ENCODE measurements at regions of chr4 and their contacts with region 1.

Region 1: DNA sequence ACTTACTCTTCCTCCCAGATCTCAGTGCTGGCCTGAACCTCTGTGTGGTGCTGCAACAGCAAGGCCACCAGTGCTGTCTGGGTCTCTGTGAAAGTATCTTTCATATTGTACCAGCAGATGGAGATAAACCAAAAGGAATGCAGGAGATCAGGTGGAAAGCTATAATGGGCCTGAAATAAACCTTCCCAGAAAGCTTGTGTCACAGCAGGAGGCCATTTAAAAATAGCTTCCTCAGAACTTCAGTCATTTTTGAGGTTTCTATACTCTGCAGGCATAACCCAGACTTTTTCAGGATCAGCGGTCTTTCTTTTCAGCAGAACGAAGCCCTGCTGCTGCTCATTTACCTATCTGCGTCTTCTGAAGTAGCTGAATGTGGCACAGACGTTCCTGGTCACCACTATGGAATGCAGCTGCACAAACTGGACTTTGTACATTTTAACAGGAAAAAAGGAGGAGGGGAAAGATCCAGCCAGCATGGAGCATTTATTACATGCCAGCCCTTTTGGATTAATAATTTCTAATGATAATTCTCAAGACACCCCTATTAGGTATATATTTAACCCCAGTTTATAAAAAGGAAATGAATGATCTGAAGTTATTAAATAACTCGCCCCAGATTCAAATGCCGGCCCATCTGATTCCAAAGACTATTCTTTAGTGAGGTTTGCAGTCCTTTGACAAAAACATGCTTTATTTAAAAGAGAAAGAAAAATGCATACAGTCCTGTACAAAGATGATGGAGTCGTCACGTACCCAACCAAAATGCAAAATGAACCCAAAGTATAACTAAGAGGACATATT is 119.7 kb downstream of the NFKB1 start:
- DNase-seq: peak; percentile 51
- H3K4me3 ChIP-seq: no peak overlapping the region
- H3K27ac ChIP-seq: no peak overlapping the region
- H3K4me1 ChIP-seq: no peaks in the 10 kb centered on the region
- H3K27me3 ChIP-seq: no peaks in the 10 kb centered on the region
- CTCF ChIP-seq: peak; percentile 43 to 66 (median 46)
- POLR2A ChIP-seq: no peak

Region 2: DNA sequence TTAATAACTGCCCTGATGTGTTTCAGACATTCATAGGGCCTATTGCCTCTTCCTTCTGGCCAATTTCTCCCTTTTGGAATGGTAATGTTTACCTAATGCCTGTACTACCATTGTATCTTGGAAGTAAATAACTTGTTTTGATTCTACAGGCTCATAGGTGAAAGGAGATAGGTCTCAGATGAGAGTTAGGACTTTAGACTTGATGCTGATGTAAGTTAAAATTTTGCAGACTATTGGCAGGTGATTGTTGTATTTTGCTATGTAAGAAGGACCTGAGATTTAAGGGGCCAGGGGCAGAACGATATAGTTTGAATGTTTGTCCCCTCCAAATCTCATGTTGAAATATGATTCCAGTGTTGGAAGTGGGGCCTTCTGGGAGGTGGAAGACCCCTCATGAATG is 491.1 kb before region 1 on chr4:
- intact Hi-C with region 1: no loop called
- DNase-seq: no peak
- H3K4me3 ChIP-seq: no peak overlapping the region
- H3K27ac ChIP-seq: no peak overlapping the region
- H3K4me1 ChIP-seq: no peaks in the 10 kb centered on the region
- H3K27me3 ChIP-seq: no peaks in the 10 kb centered on the region
- CTCF ChIP-seq: no peak
- POLR2A ChIP-seq: no peak

Region 3: GRCh38 chr4:102449751-102450352 is 171.0 kb before region 1 on chr4:
- intact Hi-C with region 1: loop called (anchors 10 kb)
- DNase-seq: peak; percentile 48
- H3K4me3 ChIP-seq: no peak overlapping the region
- H3K27ac ChIP-seq: no peak overlapping the region
- H3K4me1 ChIP-seq: no peaks in the 10 kb centered on the region
- H3K27me3 ChIP-seq: no peaks in the 10 kb centered on the region
- CTCF ChIP-seq: peak in 2 of 3 experiments; percentile 37 to 38
- POLR2A ChIP-seq: no peak

Region 4: DNA sequence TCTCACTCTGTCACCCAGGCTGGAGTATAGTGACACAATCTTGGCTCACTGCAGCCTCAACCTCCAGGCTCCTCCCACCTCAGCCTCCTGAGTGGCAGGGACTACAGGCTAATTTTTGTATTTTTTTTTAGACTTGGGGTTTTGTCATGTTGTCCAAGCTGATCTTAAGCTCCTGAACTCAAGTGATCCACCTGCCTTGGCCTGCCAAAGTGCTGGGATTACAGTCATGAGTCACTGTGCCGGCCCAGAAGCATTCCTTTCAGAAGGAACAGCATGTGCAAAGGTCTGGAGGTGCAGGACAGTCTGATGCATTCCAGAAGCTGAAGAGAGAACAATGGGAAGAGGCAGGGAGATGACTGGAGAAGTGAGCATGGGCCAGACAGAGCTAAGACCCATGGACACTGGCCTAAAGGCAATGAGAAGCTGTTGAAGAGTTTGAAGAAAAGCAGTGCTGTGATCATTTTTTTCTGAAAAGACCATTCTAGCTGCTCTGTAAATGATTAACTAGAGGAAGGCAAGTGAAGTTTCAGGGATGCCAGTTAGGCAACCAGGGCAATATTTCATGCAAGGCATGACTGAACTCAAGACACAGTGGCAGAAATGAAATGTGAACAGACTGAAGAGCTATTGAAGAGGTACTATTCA is 96.7 kb after region 1 on chr4:
- intact Hi-C with region 1: no loop called
- DNase-seq: no peak
- H3K4me3 ChIP-seq: no peak overlapping the region
- H3K27ac ChIP-seq: no peak overlapping the region
- H3K4me1 ChIP-seq: no peaks in the 10 kb centered on the region
- H3K27me3 ChIP-seq: no peaks in the 10 kb centered on the region
- CTCF ChIP-seq: no peak
- POLR2A ChIP-seq: no peak

Region 5: DNA sequence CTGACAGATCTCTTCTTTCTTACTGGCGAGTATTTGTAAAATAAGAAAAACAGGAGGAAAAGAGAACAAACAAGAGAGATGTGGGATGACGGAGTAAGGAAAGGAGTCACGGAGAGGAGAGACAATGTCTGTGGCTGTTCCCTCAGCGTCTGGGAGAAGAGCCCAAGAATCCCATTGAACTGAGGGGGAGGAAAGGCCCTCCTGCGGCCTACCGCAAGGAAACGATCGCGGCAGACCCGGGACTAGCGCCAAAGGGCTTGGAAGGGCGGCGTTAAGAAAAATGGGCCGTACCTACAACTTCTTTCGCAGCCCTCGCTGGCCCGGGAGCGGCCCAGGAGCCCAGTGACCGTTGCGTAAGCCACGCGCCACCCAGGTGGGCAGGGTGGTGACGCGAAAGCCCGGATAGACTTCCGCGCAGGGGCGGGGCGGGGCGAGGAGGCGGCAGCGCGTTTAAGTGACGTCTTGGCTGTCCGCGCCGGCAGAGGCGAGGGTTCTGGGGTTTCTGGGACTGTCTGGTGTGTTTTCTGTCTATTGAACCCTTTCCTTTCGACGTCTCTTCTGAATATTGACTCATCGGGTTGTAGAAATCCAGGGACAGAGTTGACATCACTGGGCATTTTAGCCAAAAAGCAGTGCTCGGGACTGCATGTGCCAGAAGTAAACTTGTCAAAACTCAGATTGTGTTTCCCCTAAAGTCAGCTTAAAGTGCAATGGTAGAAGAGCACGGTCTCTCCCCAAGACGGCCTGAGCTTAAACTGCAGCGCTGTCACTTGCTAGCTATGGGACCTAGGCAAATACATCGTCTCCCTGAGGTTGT is 398.6 kb after region 1 on chr4 and contains the start of gene SLC9B1:
- intact Hi-C with region 1: loop called (anchors 10 kb)
- DNase-seq: peak; percentile 96
- H3K4me3 ChIP-seq: peak within 1 kb of the TSS; percentile 62 to 75
- H3K27ac ChIP-seq: peak within 1 kb of the TSS; percentile 95
- H3K4me1 ChIP-seq: peaks cover 7% of the 10 kb centered on the region
- H3K27me3 ChIP-seq: no peaks in the 10 kb centered on the region
- CTCF ChIP-seq: no peak
- POLR2A ChIP-seq: peak; percentile 59
- total RNA-seq, gene SLC9B1: 23.4 to 27.2 TPM

Measured in testis (tissue), 5 donors.